Prostate gland (tissue), 2 donors: ENCODE measurements at regions of chr7 and their contacts with region 1.

Region 1: DNA sequence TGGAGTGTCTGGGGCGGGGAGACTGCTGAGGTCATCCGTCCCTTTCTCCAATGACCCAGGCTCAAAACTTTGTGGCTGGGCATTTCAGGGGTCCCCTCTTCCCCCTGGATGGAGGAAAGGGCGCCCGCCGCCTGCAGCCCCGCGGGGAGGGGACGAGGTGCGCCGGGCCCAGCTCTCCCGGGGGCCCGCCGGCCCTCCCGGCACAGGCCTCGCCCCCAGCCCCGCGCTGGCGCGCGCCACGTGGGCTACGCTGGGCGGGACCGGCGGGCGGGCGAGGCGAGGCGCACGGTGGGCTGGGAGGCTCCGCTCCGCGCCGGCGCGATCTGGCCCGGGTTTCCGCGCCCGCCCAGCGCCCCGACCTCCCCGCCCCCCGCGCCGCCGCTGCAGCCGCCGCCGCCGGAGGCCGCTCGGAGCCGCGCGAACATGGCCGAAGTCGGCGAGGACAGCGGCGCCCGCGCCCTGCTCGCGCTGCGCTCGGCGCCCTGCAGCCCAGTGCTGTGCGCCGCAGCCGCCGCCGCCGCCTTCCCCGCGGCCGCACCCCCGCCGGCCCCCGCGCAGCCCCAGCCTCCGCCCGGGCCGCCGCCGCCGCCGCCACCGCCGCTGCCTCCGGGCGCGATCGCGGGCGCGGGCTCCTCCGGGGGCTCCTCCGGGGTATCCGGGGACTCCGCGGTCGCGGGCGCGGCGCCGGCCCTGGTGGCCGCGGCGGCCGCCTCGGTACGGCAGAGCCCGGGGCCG is at the start of gene FOXK1:
- DNase-seq: peak; percentile 57
- H3K4me3 ChIP-seq: peak within 1 kb of the TSS; percentile 78 to 79
- H3K27ac ChIP-seq: peak within 1 kb of the TSS; percentile 89 to 91
- H3K4me1 ChIP-seq: peaks cover 6% of the 10 kb centered on the region
- H3K27me3 ChIP-seq: no peaks in the 10 kb centered on the region
- CTCF ChIP-seq: peak in 2 of 4 experiments; percentile 5 to 15
- POLR2A ChIP-seq: no peak
- total RNA-seq, gene FOXK1: 17.3 to 47.5 TPM

Region 2: GRCh38 chr7:3991731-3992231 is 690.3 kb before region 1 on chr7:
- intact Hi-C with region 1: no loop called
- DNase-seq: no peak
- H3K4me3 ChIP-seq: no peak overlapping the region
- H3K27ac ChIP-seq: no peak overlapping the region
- H3K4me1 ChIP-seq: no peaks in the 10 kb centered on the region
- H3K27me3 ChIP-seq: no peaks in the 10 kb centered on the region
- CTCF ChIP-seq: no peak
- POLR2A ChIP-seq: no peak

Region 3: GRCh38 chr7:4428526-4428925 is 253.5 kb before region 1 on chr7:
- intact Hi-C with region 1: no loop called
- DNase-seq: no peak
- H3K4me3 ChIP-seq: no peak overlapping the region
- H3K27ac ChIP-seq: no peak overlapping the region
- H3K4me1 ChIP-seq: no peaks in the 10 kb centered on the region
- H3K27me3 ChIP-seq: no peaks in the 10 kb centered on the region
- CTCF ChIP-seq: no peak
- POLR2A ChIP-seq: no peak

Region 4: GRCh38 chr7:4725014-4725849 is 43.2 kb after region 1 on chr7:
- intact Hi-C with region 1: loop called (anchors 5 kb)
- DNase-seq: peak; percentile 84
- H3K4me3 ChIP-seq: peak overlapping the region; percentile 30 to 40
- H3K27ac ChIP-seq: peak overlapping the region; percentile 85 to 92
- H3K4me1 ChIP-seq: peaks cover 6% of the 10 kb centered on the region
- H3K27me3 ChIP-seq: no peaks in the 10 kb centered on the region
- CTCF ChIP-seq: peak in 2 of 4 experiments; percentile 16 to 29
- POLR2A ChIP-seq: peak; percentile 46

Region 5: DNA sequence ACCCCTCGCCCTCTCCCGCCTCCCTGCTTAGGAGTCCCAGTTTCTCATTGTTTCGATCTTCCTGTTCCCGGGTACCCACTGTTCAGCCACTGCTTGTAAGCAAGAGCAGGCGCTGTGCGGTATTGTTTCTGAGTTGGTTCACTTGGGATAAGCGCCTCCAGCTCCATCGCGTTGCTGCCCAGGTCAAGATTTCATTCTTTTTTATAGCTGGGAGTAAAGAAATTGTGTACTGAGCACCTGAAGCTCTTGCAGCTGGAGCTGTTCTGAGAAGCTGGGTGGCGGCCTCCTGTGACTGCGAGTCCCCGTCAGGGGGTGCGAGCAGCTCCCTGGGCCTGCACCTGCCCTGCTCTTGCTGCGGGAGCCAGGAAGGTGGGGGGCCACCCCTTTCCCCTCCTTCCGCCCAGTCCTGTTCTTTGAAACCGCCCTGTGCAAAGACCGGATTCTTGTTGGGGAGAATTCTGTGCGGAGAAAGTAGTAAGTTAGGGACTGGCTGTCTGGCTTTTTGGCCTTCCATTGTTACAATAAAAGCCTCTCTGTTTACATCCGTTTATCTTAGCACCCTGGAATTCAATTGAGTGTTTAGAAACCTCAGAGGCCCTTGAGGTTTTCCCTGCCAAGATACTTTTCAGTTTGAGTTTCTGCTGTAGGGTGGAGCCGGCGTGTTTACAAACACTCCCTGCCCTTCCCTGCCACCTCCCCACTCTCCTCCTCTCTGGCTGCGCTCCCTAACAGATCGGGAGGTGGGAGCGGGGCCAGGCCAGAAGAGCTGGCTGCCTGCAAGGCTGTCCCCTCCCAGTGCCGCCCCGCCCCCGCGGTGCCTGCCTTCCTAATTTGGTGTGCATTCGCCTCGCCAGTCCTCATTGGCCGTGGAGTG is 62.6 kb after region 1 on chr7:
- intact Hi-C with region 1: loop called (anchors 2 kb)
- DNase-seq: peak; percentile 100
- H3K4me3 ChIP-seq: peak overlapping the region; percentile 1 to 26
- H3K27ac ChIP-seq: peak overlapping the region; percentile 88 to 94
- H3K4me1 ChIP-seq: peaks cover 5% of the 10 kb centered on the region
- H3K27me3 ChIP-seq: no peaks in the 10 kb centered on the region
- CTCF ChIP-seq: no peak
- POLR2A ChIP-seq: peak; percentile 47

Region 6: GRCh38 chr7:5077740-5078139 is 395.7 kb after region 1 on chr7:
- intact Hi-C with region 1: no loop called
- DNase-seq: no peak
- H3K4me3 ChIP-seq: no peak overlapping the region
- H3K27ac ChIP-seq: no peak overlapping the region
- H3K4me1 ChIP-seq: no peaks in the 10 kb centered on the region
- H3K27me3 ChIP-seq: no peaks in the 10 kb centered on the region
- CTCF ChIP-seq: no peak
- POLR2A ChIP-seq: no peak

Region 7: GRCh38 chr7:5094641-5095040 is 412.6 kb after region 1 on chr7:
- intact Hi-C with region 1: no loop called
- DNase-seq: no peak
- H3K4me3 ChIP-seq: no peak overlapping the region
- H3K27ac ChIP-seq: no peak overlapping the region
- H3K4me1 ChIP-seq: no peaks in the 10 kb centered on the region
- H3K27me3 ChIP-seq: no peaks in the 10 kb centered on the region
- CTCF ChIP-seq: no peak
- POLR2A ChIP-seq: no peak